ENCODE measurements at regions of chr9 and their contacts with region 1.

Region 1: DNA sequence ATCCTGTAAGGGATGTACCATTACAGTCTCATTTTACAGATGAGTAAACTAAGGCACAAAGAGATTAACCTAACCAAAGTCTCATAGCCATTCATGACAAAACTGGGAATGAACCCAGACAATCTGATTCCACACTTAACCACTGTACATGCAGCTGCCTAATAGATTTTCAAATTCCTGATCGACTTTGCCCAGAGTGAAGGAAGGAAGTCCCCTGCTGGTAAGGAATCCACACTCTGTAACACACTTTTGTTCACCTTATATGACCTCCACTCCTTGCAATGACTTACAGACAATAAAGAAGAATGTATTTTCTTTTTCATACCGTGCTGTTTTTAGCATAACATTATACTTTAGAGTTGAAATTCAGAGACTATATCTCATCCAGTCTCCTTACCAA is 31.3 kb upstream of the PLPP6 start:
- DNase-seq: no peak
- ATAC-seq: no peak
- H3K4me3 ChIP-seq: no peak overlapping the region
- H3K27ac ChIP-seq: no peak overlapping the region
- H3K4me1 ChIP-seq: no peaks in the 10 kb centered on the region
- H3K27me3 ChIP-seq: no peaks in the 10 kb centered on the region; the same call in none of the 2 replicates
- CTCF ChIP-seq: no peak
- POLR2A ChIP-seq: no peak
- RAD21 ChIP-seq: no peak

Region 2: GRCh38 chr9:4574657-4575243 is 56.1 kb before region 1 on chr9:
- CTCF ChIA-PET with region 1: no interaction called
- POLR2A ChIA-PET with region 1: no interaction called
- dilution Hi-C with region 1: no loop called
- in situ Hi-C with region 1: no loop called
- intact Hi-C with region 1: loop called (anchors 10 kb)
- DNase-seq: no peak
- ATAC-seq: no peak
- H3K4me3 ChIP-seq: no peak overlapping the region
- H3K27ac ChIP-seq: no peak overlapping the region
- H3K4me1 ChIP-seq: no peaks in the 10 kb centered on the region
- H3K27me3 ChIP-seq: peaks cover 3% of the 10 kb centered on the region; the same call in 1 of the 2 replicates
- CTCF ChIP-seq: no peak
- POLR2A ChIP-seq: no peak
- RAD21 ChIP-seq: no peak

Region 3: GRCh38 chr9:4662108-4662988 is 31.5 kb after region 1 on chr9 and contains the start of gene PLPP6:
- CTCF ChIA-PET with region 1: no interaction called
- POLR2A ChIA-PET with region 1: no interaction called
- dilution Hi-C with region 1: no loop called
- in situ Hi-C with region 1: no loop called
- intact Hi-C with region 1: no loop called
- DNase-seq: peak; percentile 75
- ATAC-seq: peak; percentile 88
- H3K4me3 ChIP-seq: peak within 1 kb of the TSS; percentile 91
- H3K27ac ChIP-seq: peak within 1 kb of the TSS; percentile 85
- H3K4me1 ChIP-seq: peaks cover 9% of the 10 kb centered on the region
- H3K27me3 ChIP-seq: no peaks in the 10 kb centered on the region
- CTCF ChIP-seq: peak; percentile 54
- POLR2A ChIP-seq: peak; percentile 56; the same call in 1 of the 2 replicates
- RAD21 ChIP-seq: peak; percentile 42
- total RNA-seq, gene PLPP6: 3.3 and 3.4 TPM in 2 replicates

Region 4: GRCh38 chr9:4713849-4714248 is 83.0 kb after region 1 on chr9:
- CTCF ChIA-PET with region 1: no interaction called
- POLR2A ChIA-PET with region 1: interaction called, 11 read pairs
- dilution Hi-C with region 1: no loop called
- in situ Hi-C with region 1: no loop called
- intact Hi-C with region 1: no loop called
- DNase-seq: no peak
- ATAC-seq: no peak
- H3K4me3 ChIP-seq: no peak overlapping the region
- H3K27ac ChIP-seq: no peak overlapping the region
- H3K4me1 ChIP-seq: no peaks in the 10 kb centered on the region
- H3K27me3 ChIP-seq: no peaks in the 10 kb centered on the region
- CTCF ChIP-seq: no peak
- POLR2A ChIP-seq: no peak
- RAD21 ChIP-seq: no peak

Measured in IMR-90 (cell line).